Stomach (tissue), 19 donors: ENCODE measurements at regions of chr9 and their contacts with region 1.

Region 1: DNA sequence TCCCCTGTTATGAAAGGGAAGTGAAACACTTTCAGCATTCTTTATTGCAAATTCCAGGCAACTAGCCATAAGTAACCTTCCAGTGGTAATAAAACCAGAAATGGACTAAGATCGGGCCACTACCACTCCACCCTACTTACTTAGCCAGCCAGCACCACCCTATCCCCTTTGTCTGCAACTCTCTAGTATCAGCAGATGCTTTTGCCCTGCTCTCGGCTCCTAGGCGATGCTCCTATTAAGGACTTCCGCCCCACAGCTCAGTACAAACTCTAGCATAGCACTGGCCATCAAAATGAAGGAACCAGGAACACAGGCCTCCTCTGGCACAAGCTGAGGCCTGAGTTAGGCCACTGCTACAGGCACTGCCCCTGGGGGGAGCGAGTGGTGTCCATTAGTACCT is 81.2 kb downstream of the GLDC start:
- DNase-seq: no peak
- H3K4me3 ChIP-seq: no peak overlapping the region
- H3K27ac ChIP-seq: no peak overlapping the region
- H3K4me1 ChIP-seq: no peaks in the 10 kb centered on the region
- H3K27me3 ChIP-seq: no peaks in the 10 kb centered on the region
- CTCF ChIP-seq: no peak
- EP300 ChIP-seq: no peak
- POLR2A ChIP-seq: no peak

Region 2: DNA sequence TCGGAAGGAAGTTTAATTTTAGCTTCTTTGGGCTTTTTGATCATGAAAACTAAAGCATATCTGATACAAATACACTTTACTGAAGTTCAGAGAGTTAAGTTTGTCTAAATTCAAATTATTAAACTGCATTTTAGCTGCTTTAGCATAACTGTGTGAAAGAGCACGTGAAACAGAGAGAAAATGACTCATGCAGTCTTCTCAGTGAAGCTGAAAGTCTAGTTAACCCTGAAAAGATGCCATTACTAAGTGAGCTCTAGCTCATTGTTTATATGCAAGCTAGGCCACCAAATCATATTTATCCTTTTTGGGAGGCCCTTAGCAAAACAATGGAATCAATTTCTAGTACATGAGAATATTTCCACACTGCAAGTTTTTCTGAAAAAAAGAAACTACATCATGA is 208.6 kb before region 1 on chr9:
- intact Hi-C with region 1: loop called (anchors 5 kb)
- DNase-seq: peak in 1 of 2 donors; percentile 20
- H3K4me3 ChIP-seq: no peak overlapping the region
- H3K27ac ChIP-seq: no peak overlapping the region
- H3K4me1 ChIP-seq: peaks cover 0 to 4% (median 0%) of the 10 kb centered on the region in 4 donors
- H3K27me3 ChIP-seq: no peaks in the 10 kb centered on the region
- CTCF ChIP-seq: no peak
- EP300 ChIP-seq: no peak
- POLR2A ChIP-seq: no peak